GM12878 (cell line): ENCODE measurements at regions of chr1 and their contacts with region 1.

Region 1: GRCh38 chr1:216310776-216311175 is 112.5 kb downstream of the USH2A start:
- DNase-seq: no peak
- ATAC-seq: peak; percentile 60
- H3K4me3 ChIP-seq: no peak overlapping the region
- H3K27ac ChIP-seq: no peak overlapping the region
- H3K4me1 ChIP-seq: no peaks in the 10 kb centered on the region
- H3K27me3 ChIP-seq: no peaks in the 10 kb centered on the region
- CTCF ChIP-seq: peak; percentile 36 to 57 (median 46); a peak in 5 of 6 replicates
- EP300 ChIP-seq: no peak
- POLR2A ChIP-seq: no peak
- RAD21 ChIP-seq: peak; percentile 68

Region 2: DNA sequence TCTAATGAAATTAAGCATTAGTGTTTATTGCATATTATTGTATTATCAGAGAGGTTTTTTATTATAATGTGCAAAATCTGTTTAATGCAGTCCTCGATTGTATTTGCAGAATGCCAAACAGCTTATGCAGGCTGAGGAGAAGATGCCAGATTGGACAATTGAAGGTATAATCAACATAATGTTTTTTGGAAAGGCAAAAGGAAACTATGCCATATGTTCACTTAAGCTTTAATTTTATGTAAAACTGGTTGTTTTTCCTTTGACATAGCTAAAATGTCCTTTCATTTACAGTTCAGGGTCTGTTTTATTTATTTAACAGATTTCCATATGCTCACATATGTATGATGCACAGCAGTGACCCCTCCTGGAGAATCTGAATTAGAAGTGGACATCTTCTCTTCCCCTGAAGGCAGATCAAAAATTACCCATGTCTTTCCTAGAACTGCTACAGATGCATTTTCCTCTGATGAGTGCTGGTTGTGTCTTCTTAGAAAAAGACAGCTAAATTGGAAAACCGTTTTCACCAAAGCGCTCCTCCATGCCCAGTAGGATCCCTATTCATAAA is 255.9 kb after region 1 on chr1:
- CTCF ChIA-PET with region 1: interaction called, 7 read pairs
- POLR2A ChIA-PET with region 1: no interaction called
- RAD21 ChIA-PET with region 1: no interaction called
- SMC1A ChIA-PET with region 1: interaction called, 3 read pairs
- in situ Hi-C with region 1: no loop called
- intact Hi-C with region 1: loop called (anchors 5 kb)
- DNase-seq: no peak
- ATAC-seq: peak; percentile 48; the same call in 1 of the 3 replicates
- H3K4me3 ChIP-seq: no peak overlapping the region
- H3K27ac ChIP-seq: no peak overlapping the region
- H3K4me1 ChIP-seq: no peaks in the 10 kb centered on the region
- H3K27me3 ChIP-seq: no peaks in the 10 kb centered on the region
- CTCF ChIP-seq: peak; percentile 16 to 35 (median 20); a peak in 2 of 6 replicates
- EP300 ChIP-seq: no peak
- POLR2A ChIP-seq: no peak
- RAD21 ChIP-seq: peak; percentile 46

Region 3: GRCh38 chr1:216750012-216750627 is 439.3 kb after region 1 on chr1:
- CTCF ChIA-PET with region 1: no interaction called
- POLR2A ChIA-PET with region 1: no interaction called
- RAD21 ChIA-PET with region 1: no interaction called
- SMC1A ChIA-PET with region 1: no interaction called
- in situ Hi-C with region 1: no loop called
- intact Hi-C with region 1: loop called (anchors 5 kb)
- DNase-seq: no peak
- ATAC-seq: peak; percentile 64
- H3K4me3 ChIP-seq: no peak overlapping the region
- H3K27ac ChIP-seq: no peak overlapping the region
- H3K4me1 ChIP-seq: no peaks in the 10 kb centered on the region
- H3K27me3 ChIP-seq: no peaks in the 10 kb centered on the region
- CTCF ChIP-seq: peak; percentile 44 to 56 (median 54); a peak in 5 of 6 replicates
- EP300 ChIP-seq: no peak
- POLR2A ChIP-seq: no peak
- RAD21 ChIP-seq: peak; percentile 67